Thyroid gland (tissue), 4 donors: ENCODE measurements at regions of chr2 and their contacts with region 1.

Region 1: DNA sequence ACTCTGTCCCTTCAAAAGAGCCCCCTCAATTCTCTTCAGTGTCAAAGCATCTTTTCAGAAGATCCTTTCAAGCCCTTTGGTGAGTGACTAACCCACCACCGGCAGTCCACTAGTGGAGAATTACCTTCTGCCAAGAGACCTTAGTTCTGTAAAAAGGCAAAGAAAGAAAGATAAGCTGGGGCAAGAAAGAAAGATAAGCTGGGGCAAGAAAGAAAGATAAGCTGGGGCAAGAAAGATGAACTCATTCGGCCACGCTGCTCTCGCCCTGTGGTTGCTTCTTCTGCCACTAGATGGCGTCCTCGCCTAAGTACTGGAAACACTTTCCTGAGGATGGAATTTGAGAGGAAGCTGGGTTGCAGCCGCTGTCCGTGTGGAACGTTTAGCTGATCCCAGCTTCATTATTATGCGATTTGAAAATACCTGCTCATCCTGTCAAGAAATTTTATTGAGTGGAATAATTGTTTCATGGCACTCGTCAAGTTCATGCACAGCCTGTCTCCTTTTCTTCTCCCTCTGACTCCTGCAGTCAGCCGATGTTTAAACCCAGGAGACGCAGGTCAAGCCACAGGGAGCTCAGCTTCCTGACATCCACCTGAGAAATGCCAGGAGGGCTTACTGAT is 17.3 kb upstream of the ANXA4 start:
- DNase-seq: peak; percentile 85 to 88
- H3K4me3 ChIP-seq: no peak overlapping the region
- H3K27ac ChIP-seq: no peak overlapping the region
- H3K4me1 ChIP-seq: peaks cover 0 to 3% of the 10 kb centered on the region in 2 donors
- H3K27me3 ChIP-seq: no peaks in the 10 kb centered on the region
- CTCF ChIP-seq: peak; percentile 90 to 98 (median 96)
- POLR2A ChIP-seq: no peak

Region 2: GRCh38 chr2:69372767-69373166 is 351.9 kb before region 1 on chr2:
- intact Hi-C with region 1: no loop called
- DNase-seq: no peak
- H3K4me3 ChIP-seq: no peak overlapping the region
- H3K27ac ChIP-seq: no peak overlapping the region
- H3K4me1 ChIP-seq: peaks cover 0 to 4% of the 10 kb centered on the region in 2 donors
- H3K27me3 ChIP-seq: no peaks in the 10 kb centered on the region
- CTCF ChIP-seq: no peak
- POLR2A ChIP-seq: no peak

Region 3: GRCh38 chr2:69816923-69817542 is 92.4 kb after region 1 on chr2:
- intact Hi-C with region 1: loop called (anchors 2 kb)
- DNase-seq: peak; percentile 79 to 81
- H3K4me3 ChIP-seq: no peak overlapping the region
- H3K27ac ChIP-seq: no peak overlapping the region
- H3K4me1 ChIP-seq: no peaks in the 10 kb centered on the region
- H3K27me3 ChIP-seq: no peaks in the 10 kb centered on the region
- CTCF ChIP-seq: peak; percentile 80 to 98 (median 94)
- POLR2A ChIP-seq: no peak

Region 4: DNA sequence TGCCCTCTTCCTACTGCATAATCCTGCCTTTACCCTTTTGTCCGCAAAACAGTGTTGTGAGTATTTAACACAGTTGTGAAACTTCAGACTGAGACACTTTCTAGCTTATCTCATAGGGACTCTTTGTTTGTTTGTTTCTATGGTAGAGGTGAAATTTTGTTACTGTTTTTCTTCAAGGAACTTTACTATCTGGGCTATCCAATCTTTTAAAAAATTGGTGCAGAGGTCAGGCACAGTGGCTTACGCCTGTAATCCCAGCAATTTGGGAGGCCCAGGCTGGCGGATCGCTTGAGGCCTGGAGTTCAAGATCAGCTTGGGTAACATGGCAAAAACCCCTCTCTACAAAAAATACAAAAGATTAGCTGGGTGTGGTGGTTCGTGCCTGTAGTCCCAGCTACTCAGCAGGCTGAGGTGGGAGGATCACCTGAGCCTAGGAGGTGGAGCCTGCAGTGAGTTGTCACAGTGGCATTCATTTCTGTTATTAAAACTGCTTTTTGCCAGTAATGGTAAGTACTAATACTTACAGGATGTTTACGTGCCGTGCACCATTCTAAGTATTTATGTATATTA is 123.6 kb after region 1 on chr2:
- intact Hi-C with region 1: no loop called
- DNase-seq: no peak
- H3K4me3 ChIP-seq: no peak overlapping the region
- H3K27ac ChIP-seq: no peak overlapping the region
- H3K4me1 ChIP-seq: no peaks in the 10 kb centered on the region
- H3K27me3 ChIP-seq: no peaks in the 10 kb centered on the region
- CTCF ChIP-seq: no peak
- POLR2A ChIP-seq: no peak